ENCODE measurements at regions of chr3 and their contacts with region 1.

Region 1: GRCh38 chr3:186807231-186807630 is 949 bp upstream of the RFC4 start:
- DNase-seq: no peak
- H3K4me3 Mint-ChIP-seq: peak overlapping the region; percentile 95
- H3K27ac Mint-ChIP-seq: peak overlapping the region; percentile 98
- H3K4me1 Mint-ChIP-seq: peaks cover 41% of the 10 kb centered on the region
- H3K27me3 Mint-ChIP-seq: no peaks in the 10 kb centered on the region

Region 2: DNA sequence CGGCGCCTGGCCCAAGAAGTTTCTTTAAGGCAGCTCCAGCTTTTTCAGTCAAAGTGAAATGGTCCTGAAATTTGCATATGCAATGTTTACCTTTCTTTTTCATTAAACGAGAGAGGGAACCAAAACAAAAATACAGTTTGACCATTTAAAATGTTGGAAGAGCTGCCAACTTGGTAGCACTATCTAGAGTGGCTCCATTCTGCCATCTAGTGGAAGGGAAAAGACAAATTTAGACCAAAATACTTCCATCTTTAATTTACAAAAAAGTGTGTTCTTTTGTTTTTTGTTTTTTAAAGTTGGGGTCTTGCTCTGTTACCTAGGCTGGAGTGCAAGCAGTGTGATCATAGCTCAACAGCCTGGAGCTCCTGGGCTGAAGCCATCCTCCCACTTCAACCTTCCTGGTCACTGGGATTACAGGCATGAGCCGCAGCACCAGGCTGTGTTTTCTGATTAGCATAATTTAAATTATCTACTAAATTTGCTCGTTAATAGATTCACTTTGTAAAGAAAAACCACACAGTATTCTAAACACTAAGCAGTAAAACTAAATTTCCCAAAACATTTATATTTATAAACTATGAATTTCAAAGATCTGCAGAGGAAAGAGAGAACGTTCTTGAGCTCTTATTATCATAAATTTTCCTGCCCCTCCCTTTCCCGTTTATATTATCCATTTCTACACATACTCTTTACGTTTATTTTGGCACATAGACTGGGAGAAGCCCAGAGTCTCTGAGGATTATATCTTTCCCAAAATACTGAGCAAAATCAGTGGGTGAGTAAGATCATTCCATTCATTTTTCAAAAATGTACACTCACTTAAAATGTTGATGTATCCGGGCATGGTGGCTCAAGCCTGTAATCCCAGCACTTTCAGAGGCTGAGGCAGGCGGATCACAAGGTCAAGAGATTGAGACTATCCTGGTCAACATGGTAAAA is 14.5 kb after region 1 on chr3:
- CTCF ChIA-PET with region 1: interaction called, 11 read pairs
- POLR2A ChIA-PET with region 1: no interaction called
- DNase-seq: peak; percentile 54
- H3K4me3 Mint-ChIP-seq: no peak overlapping the region
- H3K27ac Mint-ChIP-seq: no peak overlapping the region
- H3K4me1 Mint-ChIP-seq: peaks cover 18% of the 10 kb centered on the region
- H3K27me3 Mint-ChIP-seq: peaks cover 8% of the 10 kb centered on the region

Measured in activated CD4-positive, alpha-beta T cell treated with anti-CD3 and anti-CD28 coated beads, Interleukin-2, amount 10 ng/mL, durations not matched to agents 7 days and 5 days (primary cell).